ENCODE measurements at regions of chr2 and their contacts with region 1.

Region 1: DNA sequence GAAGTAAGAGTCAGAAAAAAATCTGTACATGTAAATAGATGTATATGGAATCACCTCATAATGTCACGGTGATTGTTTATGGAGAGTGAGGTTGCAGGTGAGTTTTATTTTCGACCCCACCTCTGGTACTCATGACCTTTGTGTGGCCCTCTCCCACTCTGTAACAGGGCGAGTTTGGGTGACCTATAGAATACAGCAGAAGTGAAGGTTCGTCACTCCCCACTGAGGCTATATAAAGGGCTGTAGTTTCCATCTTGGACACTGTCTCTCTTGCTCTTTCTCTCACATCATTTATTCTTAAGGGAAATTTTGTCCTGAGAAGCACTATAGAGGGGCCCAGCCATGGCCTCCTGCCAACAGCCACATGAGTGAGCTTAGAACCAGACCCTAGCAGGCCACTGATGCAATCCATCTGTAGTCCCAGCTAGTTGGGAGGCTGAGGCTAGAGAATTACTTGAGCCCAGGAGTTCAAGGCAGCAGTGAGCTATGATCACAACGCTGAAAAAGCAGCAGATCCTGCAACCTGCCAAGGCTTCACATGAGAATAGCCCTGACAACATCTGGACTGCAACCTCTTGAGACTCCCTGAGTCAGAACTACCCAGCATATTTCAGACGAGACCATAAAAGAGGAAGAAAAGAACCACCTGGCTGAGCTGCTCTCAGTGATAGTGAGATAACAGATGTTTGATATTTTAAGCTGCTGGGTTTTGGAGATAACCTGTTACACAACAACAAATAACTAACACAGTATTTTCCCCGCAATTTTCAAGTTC is 74.3 kb upstream of the SLC1A4 start:
- DNase-seq: no peak
- H3K4me3 ChIP-seq: no peak overlapping the region
- H3K27ac ChIP-seq: no peak overlapping the region
- H3K4me1 ChIP-seq: no peaks in the 10 kb centered on the region
- H3K27me3 ChIP-seq: no peaks in the 10 kb centered on the region
- CTCF ChIP-seq: no peak

Region 2: DNA sequence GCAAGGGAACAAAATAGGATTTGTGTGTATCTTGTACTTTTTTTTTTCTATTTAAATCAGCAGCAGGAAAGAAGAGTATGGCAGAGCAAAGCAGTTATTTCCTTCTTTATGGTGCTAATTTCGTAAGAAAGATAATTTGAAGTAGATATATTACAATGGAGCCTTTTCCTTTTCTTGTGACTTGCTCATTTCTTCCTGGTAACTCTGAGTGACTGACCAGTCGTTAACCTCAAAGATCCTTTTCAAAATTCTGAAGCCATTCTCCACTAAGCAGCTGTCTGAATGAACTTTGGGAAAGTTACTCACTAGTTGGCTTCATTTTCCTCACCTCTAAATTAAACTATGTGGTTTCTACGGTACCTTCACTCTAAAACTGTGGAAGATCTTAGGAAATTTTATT is 366.2 kb before region 1 on chr2:
- CTCF ChIA-PET with region 1: no interaction called
- POLR2A ChIA-PET with region 1: no interaction called
- intact Hi-C with region 1: no loop called
- DNase-seq: no peak
- H3K4me3 ChIP-seq: no peak overlapping the region
- H3K27ac ChIP-seq: no peak overlapping the region
- H3K4me1 ChIP-seq: no peaks in the 10 kb centered on the region
- H3K27me3 ChIP-seq: no peaks in the 10 kb centered on the region
- CTCF ChIP-seq: no peak

Region 3: GRCh38 chr2:64978514-64979268 is 63.8 kb after region 1 on chr2:
- CTCF ChIA-PET with region 1: no interaction called
- POLR2A ChIA-PET with region 1: no interaction called
- intact Hi-C with region 1: no loop called
- DNase-seq: no peak
- H3K4me3 ChIP-seq: no peak overlapping the region
- H3K27ac ChIP-seq: no peak overlapping the region
- H3K4me1 ChIP-seq: peaks cover 16% of the 10 kb centered on the region
- H3K27me3 ChIP-seq: no peaks in the 10 kb centered on the region
- CTCF ChIP-seq: no peak

Region 4: GRCh38 chr2:65033178-65033577 is 118.3 kb after region 1 on chr2:
- CTCF ChIA-PET with region 1: interaction called, 21 read pairs
- POLR2A ChIA-PET with region 1: no interaction called
- intact Hi-C with region 1: no loop called
- DNase-seq: no peak
- H3K4me3 ChIP-seq: no peak overlapping the region
- H3K27ac ChIP-seq: no peak overlapping the region
- H3K4me1 ChIP-seq: no peaks in the 10 kb centered on the region
- H3K27me3 ChIP-seq: no peaks in the 10 kb centered on the region
- CTCF ChIP-seq: no peak; the same call in 1 of the 2 replicates

Region 5: DNA sequence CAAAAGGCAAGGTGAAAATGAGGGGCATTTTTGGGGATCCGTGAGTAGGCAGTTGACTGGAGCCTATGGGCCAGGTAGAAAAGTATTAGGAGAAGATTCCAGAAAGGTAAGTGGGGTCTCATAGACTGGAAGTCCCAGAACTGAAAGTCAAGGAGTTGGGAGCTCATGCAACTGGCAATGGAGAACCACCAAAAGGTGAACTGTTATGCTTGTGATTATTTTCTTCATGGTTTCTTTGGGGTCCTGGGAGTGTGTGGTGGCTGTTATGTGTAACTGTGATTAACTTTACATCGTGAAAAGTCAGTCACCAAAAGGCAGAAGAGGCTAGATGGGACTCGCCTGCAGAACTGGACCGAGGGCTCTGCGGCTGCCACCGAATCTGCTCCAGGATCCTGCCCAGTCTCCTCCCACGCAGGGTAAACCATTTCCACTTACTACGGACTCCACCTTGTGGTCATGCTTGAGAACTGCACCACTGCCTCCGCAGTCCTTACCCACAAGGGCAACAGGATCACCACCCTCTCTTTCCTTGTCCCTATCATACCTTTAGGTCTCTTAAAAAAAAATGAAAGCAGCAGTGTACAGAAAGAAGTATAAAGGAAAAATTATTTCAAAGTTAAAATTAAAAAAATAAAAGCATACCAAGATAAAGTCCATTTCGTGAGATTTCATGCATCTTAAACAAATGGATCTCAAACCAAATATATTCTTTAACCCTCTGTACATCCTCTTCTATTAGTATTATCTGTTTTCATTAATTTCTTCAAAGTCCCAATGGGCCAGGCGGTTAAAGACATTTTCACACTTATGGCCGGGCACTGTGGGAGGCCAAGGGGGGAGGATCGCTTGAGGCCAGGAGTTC is 125.7 kb after region 1 on chr2:
- CTCF ChIA-PET with region 1: interaction called, 13 read pairs
- POLR2A ChIA-PET with region 1: interaction called, 5 read pairs
- intact Hi-C with region 1: loop called (anchors 1 kb)
- DNase-seq: peak; percentile 58 to 76
- H3K4me3 ChIP-seq: no peak overlapping the region
- H3K27ac ChIP-seq: no peak overlapping the region
- H3K4me1 ChIP-seq: 0 out of 2 replicates have a peak, but pooled peaks cover 2% of the 10 kb centered on the region
- H3K27me3 ChIP-seq: no peaks in the 10 kb centered on the region
- CTCF ChIP-seq: peak; percentile 98